ENCODE measurements at regions of chr1 and their contacts with region 1.

Region 1: GRCh38 chr1:185291652-185292051 is 25.4 kb downstream of the IVNS1ABP start:
- DNase-seq: no peak
- ATAC-seq: no peak
- H3K4me3 Mint-ChIP-seq: no peak overlapping the region
- H3K27ac Mint-ChIP-seq: no peak overlapping the region
- H3K4me1 Mint-ChIP-seq: peaks cover 21% of the 10 kb centered on the region
- H3K27me3 Mint-ChIP-seq: no peaks in the 10 kb centered on the region

Region 2: DNA sequence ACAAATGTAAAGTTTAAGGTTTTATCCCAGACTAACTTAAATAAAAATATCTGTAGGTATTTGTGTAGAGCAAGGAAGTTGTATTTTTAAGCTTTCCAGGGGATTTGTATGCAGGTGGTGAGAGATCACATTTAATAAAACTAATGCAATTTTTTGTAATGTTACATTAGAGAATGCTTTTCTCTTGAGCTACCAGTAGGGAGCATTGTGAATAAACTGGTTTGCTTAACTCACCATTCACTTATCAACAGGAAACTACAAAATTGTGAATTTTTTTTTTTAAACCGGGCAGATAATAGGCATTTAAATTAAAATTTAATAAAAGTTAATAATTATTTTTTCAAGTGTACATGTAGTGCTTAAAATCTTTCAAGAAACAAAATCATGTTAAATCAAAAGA is 53.2 kb before region 1 on chr1:
- CTCF ChIA-PET with region 1: interaction called, 10 read pairs
- POLR2A ChIA-PET with region 1: no interaction called
- DNase-seq: no peak
- ATAC-seq: no peak
- H3K4me3 Mint-ChIP-seq: no peak overlapping the region
- H3K27ac Mint-ChIP-seq: no peak overlapping the region
- H3K4me1 Mint-ChIP-seq: peaks cover 17% of the 10 kb centered on the region
- H3K27me3 Mint-ChIP-seq: no peaks in the 10 kb centered on the region

Measured in activated CD8-positive, alpha-beta T cell treated with anti-CD3 and anti-CD28 coated beads, Interleukin-2, amount 10 ng/mL, durations not matched to agents 7 days and 5 days (primary cell).